CD4-positive, alpha-beta memory T cell (primary cell): ENCODE measurements at regions of chr1 and their contacts with region 1.

Region 1: GRCh38 chr1:43650310-43651085 is 549 bp downstream of the KDM4A start:
- DNase-seq: peak; percentile 90 to 97 (median 91)
- H3K4me3 ChIP-seq: peak overlapping the region; percentile 88 to 91
- H3K4me3 Mint-ChIP-seq: peak overlapping the region; percentile 95 to 100 (median 98)
- H3K27ac ChIP-seq: peak overlapping the region; percentile 79
- H3K27ac Mint-ChIP-seq: peak overlapping the region; percentile 95 to 100 (median 97)
- H3K4me1 ChIP-seq: peaks cover 35% of the 10 kb centered on the region
- H3K4me1 Mint-ChIP-seq: peaks cover 23 to 50% (median 34%) of the 10 kb centered on the region in 4 donors
- H3K27me3 ChIP-seq: no peaks in the 10 kb centered on the region
- H3K27me3 Mint-ChIP-seq: peaks cover 0 to 2% of the 10 kb centered on the region in 2 donors

Region 2: DNA sequence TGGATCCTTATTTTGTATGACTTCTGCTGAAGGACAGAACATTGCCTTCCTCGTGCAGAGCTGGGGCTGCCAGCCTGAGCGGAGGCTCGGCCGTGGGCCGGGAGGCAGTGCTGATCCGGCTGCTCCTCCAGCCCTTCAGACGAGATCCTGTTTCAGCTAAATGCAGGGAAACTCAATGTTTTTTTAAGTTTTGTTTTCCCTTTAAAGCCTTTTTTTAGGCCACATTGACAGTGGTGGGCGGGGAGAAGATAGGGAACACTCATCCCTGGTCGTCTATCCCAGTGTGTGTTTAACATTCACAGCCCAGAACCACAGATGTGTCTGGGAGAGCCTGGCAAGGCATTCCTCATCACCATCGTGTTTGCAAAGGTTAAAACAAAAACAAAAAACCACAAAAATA is 28.0 kb before region 1 on chr1:
- CTCF ChIA-PET with region 1: no interaction called
- POLR2A ChIA-PET with region 1: no interaction called
- intact Hi-C with region 1: no loop called
- DNase-seq: no peak
- H3K4me3 ChIP-seq: no peak overlapping the region
- H3K4me3 Mint-ChIP-seq: no peak overlapping the region
- H3K27ac ChIP-seq: no peak overlapping the region
- H3K27ac Mint-ChIP-seq: no peak overlapping the region
- H3K4me1 ChIP-seq: no peaks in the 10 kb centered on the region
- H3K4me1 Mint-ChIP-seq: no peaks in the 10 kb centered on the region
- H3K27me3 ChIP-seq: no peaks in the 10 kb centered on the region
- H3K27me3 Mint-ChIP-seq: peaks cover 0 to 3% of the 10 kb centered on the region in 2 donors

Region 3: GRCh38 chr1:43706598-43707495 is 56.3 kb after region 1 on chr1:
- CTCF ChIA-PET with region 1: interaction called, 3 read pairs
- POLR2A ChIA-PET with region 1: interaction called, 41 read pairs
- intact Hi-C with region 1: loop called (anchors 1 kb)
- DNase-seq: peak; percentile 87 to 91 (median 89)
- H3K4me3 ChIP-seq: peak overlapping the region; percentile 24 to 79
- H3K4me3 Mint-ChIP-seq: peak overlapping the region; percentile 85 to 94 (median 90)
- H3K27ac ChIP-seq: peak overlapping the region; percentile 55
- H3K27ac Mint-ChIP-seq: peak overlapping the region; percentile 38 to 79 (median 77)
- H3K4me1 ChIP-seq: peaks cover 16% of the 10 kb centered on the region
- H3K4me1 Mint-ChIP-seq: peaks cover 13 to 32% (median 24%) of the 10 kb centered on the region in 4 donors
- H3K27me3 ChIP-seq: no peaks in the 10 kb centered on the region
- H3K27me3 Mint-ChIP-seq: no peaks in the 10 kb centered on the region

Region 4: GRCh38 chr1:44249543-44249942 is 599.0 kb after region 1 on chr1:
- CTCF ChIA-PET with region 1: no interaction called
- POLR2A ChIA-PET with region 1: no interaction called
- intact Hi-C with region 1: no loop called
- DNase-seq: no peak
- H3K4me3 ChIP-seq: no peak overlapping the region
- H3K4me3 Mint-ChIP-seq: no peak overlapping the region
- H3K27ac ChIP-seq: no peak overlapping the region
- H3K27ac Mint-ChIP-seq: no peak overlapping the region
- H3K4me1 ChIP-seq: no peaks in the 10 kb centered on the region
- H3K4me1 Mint-ChIP-seq: peaks cover 0 to 2% (median 0%) of the 10 kb centered on the region in 4 donors
- H3K27me3 ChIP-seq: no peaks in the 10 kb centered on the region
- H3K27me3 Mint-ChIP-seq: no peaks in the 10 kb centered on the region